ENCODE measurements at regions of chr16 and their contacts with region 1.

Region 1: GRCh38 chr16:66740010-66740409 is 11.4 kb downstream of the DYNC1LI2 start:
- DNase-seq: no peak
- H3K4me3 ChIP-seq: no peak overlapping the region
- H3K27me3 ChIP-seq: no peaks in the 10 kb centered on the region
- CTCF ChIP-seq: peak; percentile 62

Region 2: DNA sequence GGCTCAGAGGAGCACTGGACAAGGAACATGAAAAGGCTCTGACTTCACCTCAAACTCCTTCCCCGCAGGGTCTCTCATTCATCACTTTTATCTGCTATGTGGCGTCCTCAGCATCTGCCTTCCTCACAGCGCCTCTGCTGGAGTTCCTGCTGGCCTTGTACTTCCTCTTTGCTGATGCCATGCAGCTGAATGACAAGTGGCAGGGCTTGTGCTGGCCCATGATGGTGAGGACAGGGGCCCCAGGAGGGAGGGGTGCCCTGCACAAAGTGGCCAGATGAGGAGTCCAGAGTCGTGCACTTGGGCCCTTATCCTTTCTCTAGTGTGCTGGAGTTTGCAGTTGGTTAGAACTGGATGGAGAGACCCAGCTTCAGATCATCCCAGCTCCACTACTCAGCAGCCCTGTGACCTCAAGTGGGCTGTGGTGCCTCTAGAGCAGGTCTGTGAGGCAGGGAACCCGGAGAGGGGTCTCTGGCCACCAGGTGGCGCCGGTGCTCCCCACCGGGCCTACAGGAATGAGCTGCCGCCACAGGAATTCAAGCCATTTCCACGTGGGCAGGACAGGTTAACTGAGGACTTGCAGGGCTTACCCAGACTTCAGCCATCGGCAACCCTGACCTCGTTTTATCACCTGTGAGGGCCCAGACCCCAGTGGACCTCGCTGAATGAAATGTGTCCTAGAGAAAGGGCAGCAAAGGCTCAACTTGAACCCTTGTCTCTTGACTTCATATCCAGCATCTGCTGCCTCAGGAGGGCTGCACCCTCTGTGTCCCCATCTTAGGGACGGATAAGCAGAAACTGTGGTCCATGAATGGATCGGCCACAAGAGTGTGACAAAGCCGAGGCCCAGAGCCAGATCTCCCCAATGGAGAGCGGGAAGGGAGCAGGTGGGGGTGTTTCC is 131.5 kb before region 1 on chr16:
- CTCF ChIA-PET with region 1: interaction called, 7 read pairs
- POLR2A ChIA-PET with region 1: interaction called, 19 read pairs
- DNase-seq: peak; percentile 32
- H3K4me3 ChIP-seq: no peak overlapping the region
- H3K27me3 ChIP-seq: no peaks in the 10 kb centered on the region
- CTCF ChIP-seq: peak; percentile 94

Region 3: DNA sequence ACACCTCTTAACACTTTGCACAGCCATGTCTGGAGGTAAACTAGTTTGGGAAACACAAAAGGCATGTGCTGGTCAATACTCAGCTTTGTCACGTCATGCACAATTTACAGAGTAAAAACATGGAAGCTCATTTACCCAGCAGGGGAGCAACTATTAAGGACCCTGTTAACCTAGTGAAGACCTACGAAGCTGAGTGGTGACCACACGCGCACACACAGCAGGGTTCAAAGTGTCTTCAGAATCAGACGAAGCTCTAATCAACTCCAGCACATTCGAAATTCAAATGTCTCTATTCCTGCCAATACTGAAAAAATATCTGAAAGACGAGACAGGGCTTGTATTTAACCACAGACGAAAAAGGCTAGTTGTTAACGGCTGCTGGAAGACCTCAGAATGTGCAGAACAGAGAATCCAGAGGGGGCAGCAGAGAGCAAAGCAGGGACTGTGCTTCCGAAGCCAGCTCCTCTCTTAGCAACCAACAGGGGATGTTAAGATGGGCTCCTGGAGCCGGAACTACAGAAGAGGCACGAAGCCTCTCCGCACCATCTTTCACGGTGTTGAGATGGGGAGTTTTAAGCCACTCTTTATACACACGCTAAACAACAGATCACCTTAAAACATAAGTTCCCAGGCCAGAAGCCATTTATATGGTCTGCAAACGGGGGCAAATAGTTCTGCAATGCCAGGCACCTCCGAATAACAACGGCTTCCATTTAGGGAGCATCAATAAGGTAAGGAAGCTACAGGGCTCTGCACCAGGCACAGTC is 89.1 kb before region 1 on chr16:
- CTCF ChIA-PET with region 1: interaction called, 10 read pairs
- POLR2A ChIA-PET with region 1: no interaction called
- DNase-seq: peak; percentile 54
- H3K4me3 ChIP-seq: no peak overlapping the region
- H3K27me3 ChIP-seq: no peaks in the 10 kb centered on the region
- CTCF ChIP-seq: peak; percentile 97

Region 4: DNA sequence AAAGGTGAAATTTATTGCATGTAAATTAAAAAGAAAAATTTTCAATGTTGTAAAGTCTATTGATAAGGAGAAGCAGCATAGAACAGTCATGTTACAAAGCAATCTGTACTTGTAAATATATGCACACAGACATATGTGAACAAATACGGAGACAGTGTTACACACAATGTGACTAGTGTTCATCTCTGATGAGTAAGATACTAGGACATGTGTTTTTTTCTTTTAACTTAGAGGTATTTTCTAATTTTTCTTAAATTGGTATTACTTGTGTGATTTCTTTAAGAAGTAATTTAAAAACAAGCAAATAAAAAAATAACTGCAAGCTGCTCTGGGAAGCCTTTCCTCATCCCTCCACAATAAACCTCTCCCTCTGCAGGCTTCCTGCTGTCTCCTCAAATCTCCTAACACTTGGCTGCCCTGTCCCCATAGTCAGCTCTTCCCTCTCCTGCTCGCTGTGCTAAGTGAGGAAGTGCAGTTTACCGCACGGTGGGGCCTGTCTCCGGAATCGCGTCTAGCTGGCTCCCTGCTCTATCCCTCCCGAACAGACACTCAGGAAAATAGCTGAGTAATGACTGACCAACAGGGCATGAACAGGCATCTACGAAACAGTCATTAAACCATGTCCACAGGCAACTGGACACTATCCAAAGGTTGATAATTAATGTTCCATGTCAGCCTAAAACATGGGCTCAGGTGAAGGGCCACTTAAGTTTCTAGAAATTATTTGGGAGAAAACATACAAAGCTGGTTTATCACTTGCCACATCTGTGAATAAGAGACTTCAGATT is 79.4 kb before region 1 on chr16:
- CTCF ChIA-PET with region 1: interaction called, 10 read pairs
- POLR2A ChIA-PET with region 1: no interaction called
- DNase-seq: peak; percentile 85
- H3K4me3 ChIP-seq: no peak overlapping the region
- H3K27me3 ChIP-seq: no peaks in the 10 kb centered on the region
- CTCF ChIP-seq: peak; percentile 58

Region 5: GRCh38 chr16:66717112-66717675 is 22.8 kb before region 1 on chr16:
- CTCF ChIA-PET with region 1: interaction called, 14 read pairs
- POLR2A ChIA-PET with region 1: no interaction called
- DNase-seq: no peak
- H3K4me3 ChIP-seq: no peak overlapping the region
- H3K27me3 ChIP-seq: no peaks in the 10 kb centered on the region
- CTCF ChIP-seq: peak; percentile 73

Region 6: DNA sequence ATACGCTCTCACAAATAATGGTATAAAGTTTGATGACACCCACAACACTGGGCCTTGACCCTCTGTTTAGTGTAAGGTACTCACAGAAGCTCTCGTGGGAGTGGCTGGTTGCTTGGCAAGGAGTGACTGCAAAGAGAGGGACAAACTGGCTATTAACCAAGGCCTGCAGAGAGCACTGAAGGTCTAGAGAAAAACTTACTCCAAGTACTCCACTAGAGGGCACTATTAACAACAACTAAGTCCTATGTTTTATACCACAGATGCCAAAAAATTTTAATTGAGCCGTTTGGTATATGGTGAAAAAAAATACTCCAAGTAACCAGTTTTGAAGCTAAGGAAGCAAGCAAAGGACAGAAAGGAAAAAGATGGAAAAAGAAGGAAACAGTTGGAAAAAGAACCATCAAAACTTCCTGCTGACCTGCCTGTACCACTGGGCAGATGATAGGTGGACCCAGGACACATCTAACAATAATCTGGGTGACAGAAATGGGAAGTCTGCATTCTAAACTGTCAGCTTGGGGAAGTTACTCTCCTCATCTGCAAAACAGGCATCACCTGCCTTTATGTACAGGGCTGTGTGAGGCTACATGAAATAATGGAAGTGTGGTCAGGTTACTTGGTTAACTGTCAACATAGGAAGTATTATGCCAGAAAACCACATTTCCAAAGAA is 11.8 kb before region 1 on chr16:
- CTCF ChIA-PET with region 1: interaction called, 129 read pairs
- POLR2A ChIA-PET with region 1: no interaction called
- DNase-seq: no peak
- H3K4me3 ChIP-seq: no peak overlapping the region
- H3K27me3 ChIP-seq: no peaks in the 10 kb centered on the region
- CTCF ChIP-seq: peak; percentile 60

Region 7: DNA sequence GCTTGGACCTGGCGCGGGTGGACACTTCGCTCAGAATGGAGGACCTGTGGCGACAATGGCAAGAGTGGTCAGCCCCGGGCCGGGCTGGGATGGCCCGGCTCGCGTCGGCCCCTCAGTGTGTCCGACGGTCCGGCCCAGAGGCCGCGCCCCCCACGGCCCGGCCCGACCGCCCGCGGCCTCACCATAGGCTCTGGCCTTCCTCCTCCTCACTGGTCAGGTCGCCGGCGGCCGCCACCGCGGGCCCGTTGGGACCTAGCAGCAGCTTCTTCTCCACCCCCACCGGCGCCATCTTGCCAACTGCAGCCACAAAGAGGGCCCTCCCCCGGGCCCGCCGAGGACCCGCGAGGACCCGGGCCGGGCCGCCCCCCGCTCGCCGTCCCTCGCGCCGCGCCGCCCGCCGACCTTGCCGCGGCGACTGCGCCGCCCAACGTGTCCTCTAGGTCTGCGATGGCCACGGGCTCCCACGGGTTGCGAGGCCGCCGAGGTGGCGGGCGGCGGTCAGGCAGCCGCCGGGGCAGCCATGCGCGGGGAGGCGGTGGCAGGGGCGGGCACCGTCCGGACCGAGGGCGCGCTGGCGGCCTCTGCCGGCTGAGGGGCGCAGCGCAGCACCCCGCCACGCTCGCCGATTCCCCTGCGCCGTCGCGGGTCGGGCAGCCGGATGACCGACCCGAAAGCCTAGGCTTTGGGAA is 11.4 kb after region 1 on chr16 and contains the start of gene DYNC1LI2:
- CTCF ChIA-PET with region 1: interaction called, 41 read pairs
- POLR2A ChIA-PET with region 1: no interaction called
- DNase-seq: no peak
- H3K4me3 ChIP-seq: peak within 1 kb of the TSS; percentile 98
- H3K27me3 ChIP-seq: no peaks in the 10 kb centered on the region; the same call in 1 of the 2 replicates
- CTCF ChIP-seq: peak; percentile 51
- polyA plus RNA-seq, gene DYNC1LI2: 82.0 and 82.8 TPM in 2 replicates

Region 8: GRCh38 chr16:67150833-67151396 is 410.9 kb after region 1 on chr16 and contains the start of gene B3GNT9:
- CTCF ChIA-PET with region 1: no interaction called
- POLR2A ChIA-PET with region 1: no interaction called
- DNase-seq: no peak
- H3K4me3 ChIP-seq: peak within 1 kb of the TSS; percentile 83
- H3K27me3 ChIP-seq: no peaks in the 10 kb centered on the region
- CTCF ChIP-seq: no peak
- polyA plus RNA-seq, gene B3GNT9: 25.7 and 34.9 TPM in 2 replicates